Head of caudate nucleus (tissue), 42 donors: ENCODE measurements at regions of chr17 and their contacts with region 1.

Region 1: DNA sequence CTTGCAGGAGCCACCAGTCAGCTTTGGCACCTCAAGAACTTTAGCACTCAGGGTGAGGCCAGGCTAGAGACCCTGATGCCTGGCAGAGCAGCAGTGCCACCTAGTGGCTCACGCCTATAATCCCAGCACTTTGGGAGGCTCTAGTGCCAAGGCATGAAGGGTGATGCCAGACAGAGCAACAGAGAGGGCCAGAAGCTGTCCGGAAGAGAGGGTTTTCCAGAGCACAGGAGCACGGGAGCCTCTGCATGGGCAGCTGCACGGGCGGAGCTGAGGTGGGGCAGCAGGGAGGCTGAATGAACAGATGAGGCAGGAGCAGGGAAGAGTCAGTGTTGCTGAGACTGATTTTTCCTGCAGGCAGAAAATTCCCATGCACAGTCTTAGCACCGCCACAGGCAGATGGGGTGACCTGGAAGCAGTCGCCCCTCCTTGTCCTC is 38.9 kb downstream of the MYH3 start:
- DNase-seq: peak; percentile 38 to 86 (median 75)

Region 2: GRCh38 chr17:9905902-9906301 is 712.3 kb before region 1 on chr17:
- intact Hi-C with region 1: loop called (anchors 10 kb)
- DNase-seq: peak in 39 of 42 donors; percentile 31 to 83 (median 58)

Region 3: GRCh38 chr17:10327640-10328039 is 290.6 kb before region 1 on chr17:
- intact Hi-C with region 1: loop called (anchors 5 kb)
- DNase-seq: peak; percentile 48 to 92 (median 81)

Region 4: GRCh38 chr17:10549096-10549842 is 69.0 kb before region 1 on chr17 and contains the start of gene MYH2:
- intact Hi-C with region 1: no loop called
- DNase-seq: no peak